CD8-positive, alpha-beta T cell (primary cell): ENCODE measurements at regions of chr19 and their contacts with region 1.

Region 1: GRCh38 chr19:40305403-40305802 is 20.3 kb upstream of the AKT2 start:
- DNase-seq: peak; percentile 49 to 85 (median 78)
- ATAC-seq: peak; percentile 59
- H3K4me3 ChIP-seq: no peak overlapping the region
- H3K4me3 Mint-ChIP-seq: no peak overlapping the region
- H3K27ac ChIP-seq: no peak overlapping the region
- H3K27ac Mint-ChIP-seq: no peak overlapping the region
- H3K4me1 ChIP-seq: no peaks in the 10 kb centered on the region
- H3K4me1 Mint-ChIP-seq: peaks cover 2% of the 10 kb centered on the region
- H3K27me3 ChIP-seq: no peaks in the 10 kb centered on the region
- H3K27me3 Mint-ChIP-seq: no peaks in the 10 kb centered on the region
- CTCF ChIP-seq: peak; percentile 83

Region 2: GRCh38 chr19:40315812-40316475 is 10.5 kb after region 1 on chr19:
- CTCF ChIA-PET with region 1: interaction called, 12 read pairs
- POLR2A ChIA-PET with region 1: no interaction called
- intact Hi-C with region 1: no loop called
- DNase-seq: no peak
- ATAC-seq: no peak
- H3K4me3 ChIP-seq: no peak overlapping the region
- H3K4me3 Mint-ChIP-seq: no peak overlapping the region
- H3K27ac ChIP-seq: no peak overlapping the region
- H3K27ac Mint-ChIP-seq: no peak overlapping the region
- H3K4me1 ChIP-seq: no peaks in the 10 kb centered on the region
- H3K4me1 Mint-ChIP-seq: no peaks in the 10 kb centered on the region
- H3K27me3 ChIP-seq: no peaks in the 10 kb centered on the region
- H3K27me3 Mint-ChIP-seq: no peaks in the 10 kb centered on the region
- CTCF ChIP-seq: no peak

Region 3: DNA sequence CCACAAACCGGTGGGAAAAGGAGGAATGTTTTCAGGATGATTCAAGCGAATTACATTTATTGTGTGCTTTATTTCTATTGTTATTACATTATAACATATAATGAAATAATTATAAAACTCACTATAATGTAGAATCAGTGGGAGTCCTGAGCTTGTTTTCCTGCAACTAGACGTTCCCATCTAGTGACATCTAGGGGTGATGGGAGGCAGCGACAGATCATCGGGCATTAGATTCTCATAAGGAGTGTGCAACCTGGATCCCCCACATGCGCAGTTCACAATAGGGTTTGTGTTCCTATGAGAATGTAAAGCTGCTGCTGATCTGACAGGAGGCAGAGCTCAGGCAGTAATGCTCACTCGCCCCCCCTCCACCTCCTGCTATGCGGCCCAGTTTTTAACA is 215.9 kb after region 1 on chr19:
- CTCF ChIA-PET with region 1: interaction called, 8 read pairs
- POLR2A ChIA-PET with region 1: no interaction called
- intact Hi-C with region 1: loop called in 1 of 2 experiments (anchors 2 kb)
- DNase-seq: peak in 2 of 9 experiments; percentile 33 to 40
- ATAC-seq: no peak
- H3K4me3 ChIP-seq: no peak overlapping the region
- H3K4me3 Mint-ChIP-seq: no peak overlapping the region
- H3K27ac ChIP-seq: no peak overlapping the region
- H3K27ac Mint-ChIP-seq: no peak overlapping the region
- H3K4me1 ChIP-seq: no peaks in the 10 kb centered on the region
- H3K4me1 Mint-ChIP-seq: peaks cover 4% of the 10 kb centered on the region
- H3K27me3 ChIP-seq: peaks cover 0 to 2% of the 10 kb centered on the region in 2 experiments
- H3K27me3 Mint-ChIP-seq: peaks cover 25% of the 10 kb centered on the region
- CTCF ChIP-seq: no peak

Region 4: GRCh38 chr19:40633207-40633606 is 327.8 kb after region 1 on chr19:
- CTCF ChIA-PET with region 1: interaction called, 16 read pairs
- POLR2A ChIA-PET with region 1: no interaction called
- intact Hi-C with region 1: loop called (anchors 1 kb)
- DNase-seq: no peak
- ATAC-seq: no peak
- H3K4me3 ChIP-seq: no peak overlapping the region
- H3K4me3 Mint-ChIP-seq: no peak overlapping the region
- H3K27ac ChIP-seq: no peak overlapping the region
- H3K27ac Mint-ChIP-seq: no peak overlapping the region
- H3K4me1 ChIP-seq: peaks cover 4% of the 10 kb centered on the region
- H3K4me1 Mint-ChIP-seq: peaks cover 12% of the 10 kb centered on the region
- H3K27me3 ChIP-seq: peaks cover 0 to 3% of the 10 kb centered on the region in 2 experiments
- H3K27me3 Mint-ChIP-seq: peaks cover 5% of the 10 kb centered on the region
- CTCF ChIP-seq: no peak